ENCODE measurements at regions of chr2 and their contacts with region 1.

Region 1: GRCh38 chr2:161063157-161063954 is 96.9 kb upstream of the TANK start:
- DNase-seq: peak; percentile 77
- H3K4me3 ChIP-seq: no peak overlapping the region
- H3K27ac ChIP-seq: no peak overlapping the region
- H3K4me1 ChIP-seq: peaks cover 7% of the 10 kb centered on the region
- H3K27me3 ChIP-seq: no peaks in the 10 kb centered on the region
- CTCF ChIP-seq: peak; percentile 93 to 96

Region 2: DNA sequence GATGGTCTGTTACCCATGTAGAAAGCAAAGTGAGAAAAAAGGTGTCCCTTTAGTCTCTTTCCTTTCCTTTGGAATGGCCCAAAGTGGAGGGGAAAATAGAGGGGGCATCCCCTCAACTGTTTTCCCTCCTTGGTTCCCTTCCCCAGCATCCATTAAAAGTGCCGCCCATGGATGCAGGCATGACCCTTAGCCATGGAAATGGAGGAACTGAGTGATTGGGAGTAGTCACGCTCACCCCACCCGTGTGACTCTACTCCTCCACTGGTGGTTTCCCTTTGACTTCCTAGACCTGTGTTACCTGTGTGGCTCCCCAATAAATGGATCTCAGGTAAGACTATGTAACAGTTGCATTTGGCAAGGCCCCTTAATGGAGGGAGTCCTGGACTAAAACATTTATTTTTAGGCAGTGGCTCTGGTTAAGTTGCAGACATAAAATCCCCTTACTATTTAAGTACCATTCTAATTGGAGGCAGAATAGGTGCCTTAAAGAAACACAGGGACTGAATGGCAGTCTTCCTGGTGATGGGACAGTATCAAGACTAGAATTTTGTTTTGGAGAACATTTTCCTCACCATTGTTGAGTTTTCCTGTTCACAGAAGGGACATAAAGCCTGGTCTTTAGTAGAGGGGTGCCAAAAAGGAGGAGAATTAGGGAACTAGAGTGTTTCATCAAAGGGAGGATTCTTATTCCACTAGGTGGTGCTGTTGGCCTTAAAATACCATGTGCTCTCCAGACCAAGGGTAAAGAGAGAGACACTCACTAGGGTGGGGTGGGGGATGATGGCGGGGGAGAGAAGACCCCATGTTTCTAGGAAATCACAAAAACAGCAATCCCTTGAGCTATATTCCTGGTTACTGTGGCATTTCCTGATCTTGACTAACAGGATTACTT is 975.3 kb before region 1 on chr2:
- CTCF ChIA-PET with region 1: interaction called, 3 read pairs
- dilution Hi-C with region 1: no loop called
- in situ Hi-C with region 1: no loop called
- intact Hi-C with region 1: loop called (anchors 1 kb)
- DNase-seq: peak; percentile 32
- H3K4me3 ChIP-seq: no peak overlapping the region
- H3K27ac ChIP-seq: no peak overlapping the region
- H3K4me1 ChIP-seq: peaks cover 23% of the 10 kb centered on the region
- H3K27me3 ChIP-seq: no peaks in the 10 kb centered on the region
- CTCF ChIP-seq: peak; percentile 37 to 41

Region 3: GRCh38 chr2:160324161-160324800 is 739.1 kb before region 1 on chr2:
- CTCF ChIA-PET with region 1: no interaction called
- dilution Hi-C with region 1: no loop called
- in situ Hi-C with region 1: no loop called
- intact Hi-C with region 1: loop called (anchors 5 kb)
- DNase-seq: peak; percentile 32
- H3K4me3 ChIP-seq: no peak overlapping the region
- H3K27ac ChIP-seq: no peak overlapping the region
- H3K4me1 ChIP-seq: no peaks in the 10 kb centered on the region
- H3K27me3 ChIP-seq: no peaks in the 10 kb centered on the region
- CTCF ChIP-seq: peak; percentile 80 to 84

Region 4: DNA sequence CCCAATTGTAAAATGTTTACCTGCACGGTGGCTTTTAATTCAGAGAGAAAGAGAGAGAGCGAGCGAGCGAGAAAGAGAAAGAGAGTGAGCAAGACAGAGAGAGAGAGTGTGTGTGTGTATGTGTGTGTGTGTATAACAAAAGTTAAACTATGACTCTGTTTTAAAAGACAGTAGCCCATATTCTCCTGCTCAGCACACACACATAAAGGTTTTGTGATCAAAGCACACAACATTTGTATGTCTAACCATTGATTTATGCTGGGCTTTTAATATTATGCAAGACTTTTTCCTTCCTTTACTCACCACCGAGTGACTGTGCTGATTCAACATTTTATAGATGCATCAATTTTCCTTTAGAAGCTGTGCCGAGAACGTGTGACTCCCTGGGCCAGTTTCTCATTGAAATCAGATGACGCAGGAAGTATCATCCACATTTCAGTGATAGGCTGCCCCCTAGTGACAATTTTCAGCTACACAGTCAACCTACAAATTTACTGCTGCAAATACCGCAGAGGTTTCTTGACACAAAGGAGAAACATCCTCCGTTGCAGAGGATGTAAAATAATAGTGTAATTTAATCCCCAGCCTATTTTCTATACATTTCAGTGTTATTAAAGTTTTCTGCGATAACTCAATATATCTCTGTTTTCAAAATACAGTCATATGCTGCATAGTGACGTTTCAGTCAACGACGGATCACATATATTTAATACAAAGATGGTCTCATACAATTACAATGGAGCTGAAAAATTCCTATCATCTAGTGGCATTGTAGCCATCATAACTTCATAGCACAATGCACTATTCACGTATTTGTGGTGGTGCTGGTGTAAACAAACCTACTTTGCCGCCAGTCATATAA is 69.0 kb before region 1 on chr2:
- CTCF ChIA-PET with region 1: no interaction called
- dilution Hi-C with region 1: no loop called
- in situ Hi-C with region 1: no loop called
- intact Hi-C with region 1: loop called (anchors 5 kb)
- DNase-seq: peak; percentile 89
- H3K4me3 ChIP-seq: no peak overlapping the region
- H3K27ac ChIP-seq: no peak overlapping the region
- H3K4me1 ChIP-seq: no peaks in the 10 kb centered on the region
- H3K27me3 ChIP-seq: no peaks in the 10 kb centered on the region
- CTCF ChIP-seq: peak; percentile 67 to 80

Region 5: DNA sequence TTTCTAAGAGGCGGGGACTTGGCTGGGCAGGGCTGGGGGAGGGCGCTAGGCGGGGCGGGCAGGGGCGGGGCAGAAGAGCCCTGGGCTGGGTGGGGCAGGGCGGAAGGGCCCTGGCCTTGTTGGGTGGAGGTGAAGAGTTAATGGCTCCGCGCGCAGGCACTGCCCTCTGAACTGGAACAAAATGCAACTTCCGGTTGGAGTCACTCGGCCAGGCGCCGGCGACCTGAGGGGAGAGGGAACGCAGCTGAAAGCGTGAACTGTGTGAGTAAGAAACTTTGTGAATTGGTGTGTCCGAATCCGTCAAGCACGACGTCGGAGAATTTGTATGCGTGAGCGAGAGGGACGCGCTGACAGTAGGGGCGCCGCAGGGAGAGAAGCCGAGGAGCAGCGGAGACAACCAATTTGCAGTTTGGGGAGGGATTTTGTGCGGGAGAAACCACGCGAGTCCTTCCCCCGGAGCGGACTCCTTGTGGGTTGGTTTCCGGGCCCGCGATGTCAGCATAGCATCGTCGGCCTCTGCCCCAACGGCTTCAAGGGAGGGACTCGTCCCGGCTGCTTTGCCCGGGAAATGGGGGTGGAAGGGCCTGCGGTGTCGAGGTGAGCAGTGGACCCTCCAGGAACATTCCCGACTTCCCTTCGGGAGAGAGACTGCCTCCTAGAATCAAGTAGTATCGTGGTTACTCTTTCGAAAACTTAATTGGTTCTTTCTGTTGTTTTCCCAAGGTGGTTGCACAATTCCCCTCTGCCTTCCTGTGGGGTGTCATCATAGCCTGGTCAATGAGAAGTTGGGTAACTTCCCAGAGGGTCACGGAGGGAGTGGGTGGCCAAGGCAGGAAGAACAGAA is 97.1 kb after region 1 on chr2 and contains the start of gene TANK:
- CTCF ChIA-PET with region 1: no interaction called
- dilution Hi-C with region 1: no loop called
- in situ Hi-C with region 1: no loop called
- intact Hi-C with region 1: loop called (anchors 5 kb)
- DNase-seq: peak; percentile 95
- H3K4me3 ChIP-seq: peak within 1 kb of the TSS; percentile 79 to 90 (median 85)
- H3K27ac ChIP-seq: peak within 1 kb of the TSS; percentile 98
- H3K4me1 ChIP-seq: peaks cover 11% of the 10 kb centered on the region
- H3K27me3 ChIP-seq: no peaks in the 10 kb centered on the region
- CTCF ChIP-seq: no peak
- total RNA-seq, gene TANK: 61.8 to 76.8 TPM

Region 6: GRCh38 chr2:162091325-162092007 is 1028.1 kb after region 1 on chr2:
- CTCF ChIA-PET with region 1: no interaction called
- dilution Hi-C with region 1: no loop called
- in situ Hi-C with region 1: no loop called
- intact Hi-C with region 1: no loop called
- DNase-seq: peak; percentile 90
- H3K4me3 ChIP-seq: no peak overlapping the region
- H3K27ac ChIP-seq: peak overlapping the region; percentile 93
- H3K4me1 ChIP-seq: peaks cover 66% of the 10 kb centered on the region
- H3K27me3 ChIP-seq: no peaks in the 10 kb centered on the region
- CTCF ChIP-seq: peak; percentile 36 to 51